ENCODE measurements at regions of chr1 and their contacts with region 1.

Region 1: DNA sequence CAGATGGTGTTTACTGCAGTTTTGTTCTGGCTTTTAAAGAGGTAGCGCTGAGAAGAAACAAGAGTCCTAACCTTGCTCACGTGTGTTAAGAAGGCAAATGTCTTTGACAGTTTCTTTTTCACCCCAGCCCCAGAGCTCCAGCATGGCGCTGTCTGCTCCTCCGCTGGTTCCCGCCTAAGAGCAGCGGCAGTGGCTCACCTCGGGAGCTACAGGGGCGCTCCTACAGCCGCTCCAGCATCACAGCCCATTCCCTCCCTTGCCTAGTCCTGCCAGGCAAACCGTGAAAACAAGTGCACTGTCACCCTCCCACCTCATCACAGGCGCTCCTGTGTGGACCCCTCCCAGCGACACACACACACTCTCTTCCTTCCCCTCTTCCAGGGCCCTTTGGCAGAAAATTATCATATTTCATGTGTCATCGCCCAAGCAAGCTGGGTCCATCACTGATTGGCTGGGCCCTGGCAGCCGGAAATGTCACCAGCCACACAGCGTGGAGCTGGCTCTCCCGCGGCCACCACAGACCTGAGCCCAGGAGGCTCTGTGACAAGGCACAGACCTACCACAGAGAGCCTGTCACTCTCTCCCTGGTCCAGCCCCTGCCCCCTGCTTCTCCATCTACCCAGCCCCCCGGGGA is 1.2 kb upstream of the HIVEP3 start:
- DNase-seq: peak; percentile 78 to 89 (median 85)
- H3K4me3 ChIP-seq: peak overlapping the region; percentile 45 to 68
- H3K4me3 Mint-ChIP-seq: peak overlapping the region; percentile 92 to 98 (median 95)
- H3K27ac ChIP-seq: peak overlapping the region; percentile 50
- H3K27ac Mint-ChIP-seq: peak overlapping the region; percentile 93 to 100 (median 98)
- H3K4me1 ChIP-seq: peaks cover 56% of the 10 kb centered on the region
- H3K4me1 Mint-ChIP-seq: peaks cover 46 to 61% (median 54%) of the 10 kb centered on the region in 4 donors
- H3K27me3 ChIP-seq: no peaks in the 10 kb centered on the region
- H3K27me3 Mint-ChIP-seq: no peaks in the 10 kb centered on the region

Region 2: DNA sequence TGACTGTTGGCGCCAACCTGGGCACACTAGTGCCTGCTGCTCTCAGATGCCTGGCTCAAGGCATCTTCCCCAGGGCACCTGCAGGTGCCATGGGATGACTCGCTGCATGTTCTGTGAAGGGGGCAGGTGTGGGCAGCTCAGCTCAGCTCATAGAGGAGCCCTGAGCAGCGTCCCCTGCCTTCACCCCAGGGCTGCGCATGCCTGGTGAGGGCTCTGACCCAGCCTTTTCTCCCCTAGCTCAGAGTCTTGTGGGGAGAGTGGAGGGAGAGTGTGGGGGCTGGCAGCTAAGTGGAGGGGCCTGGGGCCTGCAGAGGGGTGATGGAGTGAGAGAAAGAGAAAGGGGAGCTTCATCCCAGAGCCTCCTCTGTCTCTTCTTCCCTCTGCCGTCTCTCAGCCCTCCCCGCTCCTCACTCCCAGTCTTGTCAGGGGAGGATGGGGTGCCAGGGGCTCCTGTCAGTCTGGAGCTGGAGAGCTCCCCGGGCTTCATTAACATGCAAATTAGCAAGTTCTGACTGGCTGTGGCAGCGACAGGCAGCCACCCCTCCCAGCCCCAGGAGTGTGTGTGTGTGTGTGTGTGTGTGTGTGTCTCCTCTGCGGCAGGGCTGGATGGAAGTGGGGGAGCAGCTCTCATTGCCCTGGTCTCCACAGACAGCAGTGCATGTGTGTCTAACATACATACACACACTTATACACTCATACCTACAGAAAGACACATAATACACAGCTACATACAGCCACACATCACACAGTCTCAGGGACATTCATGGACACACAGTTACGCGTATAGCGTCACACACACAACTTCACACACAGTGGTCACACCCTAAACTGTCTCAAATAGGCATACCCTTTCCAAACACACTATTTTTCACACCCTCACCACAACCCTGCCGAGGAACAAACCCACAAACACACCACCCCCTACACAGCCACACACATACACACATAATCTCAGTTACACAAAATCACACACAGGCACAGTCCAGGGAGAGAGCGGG is 524.6 kb before region 1 on chr1:
- CTCF ChIA-PET with region 1: no interaction called
- POLR2A ChIA-PET with region 1: no interaction called
- intact Hi-C with region 1: no loop called
- DNase-seq: no peak
- H3K4me3 ChIP-seq: no peak overlapping the region
- H3K4me3 Mint-ChIP-seq: no peak overlapping the region
- H3K27ac ChIP-seq: no peak overlapping the region
- H3K27ac Mint-ChIP-seq: no peak overlapping the region
- H3K4me1 ChIP-seq: no peaks in the 10 kb centered on the region
- H3K4me1 Mint-ChIP-seq: peaks cover 0 to 5% (median 1%) of the 10 kb centered on the region in 4 donors
- H3K27me3 ChIP-seq: no peaks in the 10 kb centered on the region
- H3K27me3 Mint-ChIP-seq: peaks cover 9 to 31% of the 10 kb centered on the region in 2 donors

Region 3: GRCh38 chr1:41802532-41803501 is 117.1 kb before region 1 on chr1:
- CTCF ChIA-PET with region 1: no interaction called
- POLR2A ChIA-PET with region 1: interaction called, 14 read pairs
- intact Hi-C with region 1: no loop called
- DNase-seq: peak; percentile 51 to 64 (median 59)
- H3K4me3 ChIP-seq: peak overlapping the region in 1 of 2 donors; percentile 35
- H3K4me3 Mint-ChIP-seq: peak overlapping the region; percentile 12 to 79 (median 72)
- H3K27ac ChIP-seq: peak overlapping the region; percentile 55
- H3K27ac Mint-ChIP-seq: peak overlapping the region; percentile 75 to 97 (median 93)
- H3K4me1 ChIP-seq: peaks cover 87% of the 10 kb centered on the region
- H3K4me1 Mint-ChIP-seq: peaks cover 72 to 93% (median 82%) of the 10 kb centered on the region in 4 donors
- H3K27me3 ChIP-seq: no peaks in the 10 kb centered on the region
- H3K27me3 Mint-ChIP-seq: no peaks in the 10 kb centered on the region

Region 4: GRCh38 chr1:41898191-41898713 is 21.6 kb before region 1 on chr1:
- CTCF ChIA-PET with region 1: interaction called, 84 read pairs
- POLR2A ChIA-PET with region 1: interaction called, 221 read pairs
- intact Hi-C with region 1: loop called (anchors 1 kb)
- DNase-seq: peak; percentile 83 to 92 (median 88)
- H3K4me3 ChIP-seq: peak overlapping the region in 1 of 2 donors; percentile 36
- H3K4me3 Mint-ChIP-seq: peak overlapping the region; percentile 40 to 87 (median 81)
- H3K27ac ChIP-seq: peak overlapping the region; percentile 58
- H3K27ac Mint-ChIP-seq: peak overlapping the region; percentile 91 to 99 (median 96)
- H3K4me1 ChIP-seq: peaks cover 95% of the 10 kb centered on the region
- H3K4me1 Mint-ChIP-seq: peaks cover 78 to 90% (median 81%) of the 10 kb centered on the region in 4 donors
- H3K27me3 ChIP-seq: no peaks in the 10 kb centered on the region
- H3K27me3 Mint-ChIP-seq: no peaks in the 10 kb centered on the region

Region 5: GRCh38 chr1:41907446-41907845 is 12.4 kb before region 1 on chr1:
- CTCF ChIA-PET with region 1: interaction called, 8 read pairs
- POLR2A ChIA-PET with region 1: interaction called, 175 read pairs
- intact Hi-C with region 1: no loop called
- DNase-seq: no peak
- H3K4me3 ChIP-seq: no peak overlapping the region
- H3K4me3 Mint-ChIP-seq: no peak overlapping the region
- H3K27ac ChIP-seq: no peak overlapping the region
- H3K27ac Mint-ChIP-seq: peak overlapping the region in 2 of 7 donors; percentile 15 to 16
- H3K4me1 ChIP-seq: peaks cover 39% of the 10 kb centered on the region
- H3K4me1 Mint-ChIP-seq: peaks cover 29 to 57% (median 54%) of the 10 kb centered on the region in 4 donors
- H3K27me3 ChIP-seq: no peaks in the 10 kb centered on the region
- H3K27me3 Mint-ChIP-seq: peaks cover 0 to 1% of the 10 kb centered on the region in 2 donors

Region 6: DNA sequence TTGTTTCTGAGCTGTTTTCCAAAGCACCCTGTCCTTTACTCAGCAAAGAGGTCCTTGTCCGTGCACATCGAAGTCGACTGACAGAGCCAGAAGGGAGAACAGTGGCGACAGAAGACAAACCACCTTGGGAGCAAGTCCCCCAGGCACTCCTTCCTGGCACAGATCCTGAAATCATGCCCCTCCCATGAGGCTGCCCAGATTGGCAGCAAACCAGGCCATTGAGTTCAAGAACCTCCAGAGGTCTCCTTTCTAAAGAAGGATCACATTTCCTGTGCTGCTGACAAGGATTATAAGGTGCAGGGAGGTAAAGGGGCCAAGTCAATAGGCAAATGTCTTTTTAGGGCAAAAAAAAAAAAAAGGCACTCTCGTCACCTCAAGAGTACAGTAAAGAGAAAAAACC is 83.6 kb after region 1 on chr1:
- CTCF ChIA-PET with region 1: no interaction called
- POLR2A ChIA-PET with region 1: no interaction called
- intact Hi-C with region 1: no loop called
- DNase-seq: no peak
- H3K4me3 ChIP-seq: no peak overlapping the region
- H3K4me3 Mint-ChIP-seq: no peak overlapping the region
- H3K27ac ChIP-seq: no peak overlapping the region
- H3K27ac Mint-ChIP-seq: no peak overlapping the region
- H3K4me1 ChIP-seq: no peaks in the 10 kb centered on the region
- H3K4me1 Mint-ChIP-seq: peaks cover 0 to 18% (median 14%) of the 10 kb centered on the region in 4 donors
- H3K27me3 ChIP-seq: no peaks in the 10 kb centered on the region
- H3K27me3 Mint-ChIP-seq: no peaks in the 10 kb centered on the region

Region 7: DNA sequence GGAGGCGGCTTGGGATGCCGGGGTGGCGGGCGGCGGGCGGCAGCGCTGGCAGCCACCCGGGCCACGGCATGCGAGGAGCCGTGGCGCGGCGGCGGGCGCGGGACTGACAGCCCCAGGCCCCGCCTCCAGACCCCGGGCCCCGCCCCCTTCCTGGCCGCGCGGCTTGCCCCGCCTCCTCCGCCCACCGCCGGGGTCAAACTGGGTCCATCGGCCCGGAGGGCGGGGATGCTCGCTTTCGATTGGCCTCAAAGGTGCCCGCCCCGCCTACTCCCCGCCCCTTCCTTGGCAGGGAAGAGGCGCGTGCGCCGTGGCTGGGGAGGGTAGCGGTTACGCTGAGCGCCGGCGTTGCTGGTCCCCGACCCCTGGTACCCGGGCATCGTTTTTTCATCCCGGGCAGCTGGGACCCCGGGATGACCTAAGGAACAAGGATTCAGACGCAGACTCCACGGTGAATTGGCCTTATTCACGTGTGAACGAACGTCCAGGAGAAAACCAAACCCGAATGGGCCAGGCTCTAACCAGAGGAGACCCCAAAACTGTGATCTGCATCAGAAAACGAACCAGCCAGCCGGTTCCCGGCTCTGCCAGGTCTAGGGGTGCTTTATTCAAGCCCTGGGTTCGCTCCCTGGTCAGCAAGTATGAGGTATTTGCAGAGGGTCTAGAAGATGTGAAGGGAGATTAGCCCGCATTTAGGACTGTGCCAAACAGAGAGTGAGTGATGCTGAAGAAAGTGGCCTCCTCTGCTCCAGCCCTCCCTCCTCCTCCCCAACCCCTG is 116.1 kb after region 1 on chr1:
- CTCF ChIA-PET with region 1: interaction called, 11 read pairs
- POLR2A ChIA-PET with region 1: interaction called, 13 read pairs
- intact Hi-C with region 1: loop called (anchors 1 kb)
- DNase-seq: peak; percentile 95 to 98 (median 96)
- H3K4me3 ChIP-seq: peak overlapping the region; percentile 67 to 71
- H3K4me3 Mint-ChIP-seq: peak overlapping the region; percentile 80 to 85 (median 84)
- H3K27ac ChIP-seq: peak overlapping the region; percentile 40
- H3K27ac Mint-ChIP-seq: peak overlapping the region in 5 of 7 donors; percentile 31 to 85 (median 72)
- H3K4me1 ChIP-seq: peaks cover 39% of the 10 kb centered on the region
- H3K4me1 Mint-ChIP-seq: peaks cover 28 to 47% (median 35%) of the 10 kb centered on the region in 4 donors
- H3K27me3 ChIP-seq: no peaks in the 10 kb centered on the region
- H3K27me3 Mint-ChIP-seq: no peaks in the 10 kb centered on the region

Region 8: GRCh38 chr1:42046761-42047507 is 127.1 kb after region 1 on chr1:
- CTCF ChIA-PET with region 1: no interaction called
- POLR2A ChIA-PET with region 1: no interaction called
- intact Hi-C with region 1: no loop called
- DNase-seq: no peak
- H3K4me3 ChIP-seq: no peak overlapping the region
- H3K4me3 Mint-ChIP-seq: no peak overlapping the region
- H3K27ac ChIP-seq: no peak overlapping the region
- H3K27ac Mint-ChIP-seq: no peak overlapping the region
- H3K4me1 ChIP-seq: no peaks in the 10 kb centered on the region
- H3K4me1 Mint-ChIP-seq: peaks cover 0 to under 1% (median 0%) of the 10 kb centered on the region in 4 donors
- H3K27me3 ChIP-seq: peaks cover 6% of the 10 kb centered on the region
- H3K27me3 Mint-ChIP-seq: peaks cover 12 to 35% of the 10 kb centered on the region in 2 donors

Region 9: DNA sequence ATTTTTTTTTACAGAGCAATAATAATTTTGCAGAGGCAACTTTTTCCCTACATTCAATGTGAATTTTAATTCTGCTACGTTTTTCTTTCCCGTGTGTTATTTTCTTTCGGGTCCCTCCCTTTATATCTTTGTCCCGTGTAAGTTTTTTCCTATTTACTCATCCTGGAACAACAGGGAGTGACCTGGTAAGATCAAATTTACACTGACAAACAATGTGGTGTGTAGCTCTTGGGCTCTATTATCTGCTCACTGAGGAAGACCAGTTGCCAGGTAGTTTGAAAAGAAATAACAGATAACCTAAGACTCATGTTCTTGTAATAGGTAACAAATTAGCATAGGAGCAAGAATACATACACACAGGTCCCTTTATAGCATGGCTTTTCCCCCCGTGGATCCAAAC is 278.4 kb after region 1 on chr1:
- CTCF ChIA-PET with region 1: no interaction called
- POLR2A ChIA-PET with region 1: no interaction called
- intact Hi-C with region 1: no loop called
- DNase-seq: no peak
- H3K4me3 ChIP-seq: no peak overlapping the region
- H3K4me3 Mint-ChIP-seq: no peak overlapping the region
- H3K27ac ChIP-seq: no peak overlapping the region
- H3K27ac Mint-ChIP-seq: peak overlapping the region in 1 of 7 donors; percentile 3
- H3K4me1 ChIP-seq: no peaks in the 10 kb centered on the region
- H3K4me1 Mint-ChIP-seq: peaks cover 0 to 2% (median under 1%) of the 10 kb centered on the region in 4 donors
- H3K27me3 ChIP-seq: no peaks in the 10 kb centered on the region
- H3K27me3 Mint-ChIP-seq: no peaks in the 10 kb centered on the region

Measured in CD4-positive, alpha-beta memory T cell (primary cell).